HepG2 (cell line): ENCODE measurements at regions of chr3 and their contacts with region 1.

Region 1: GRCh38 chr3:57227204-57227929 is at the start of gene APPL1:
- DNase-seq: peak; percentile 84
- ATAC-seq: peak; percentile 97
- H3K4me3 ChIP-seq: peak within 1 kb of the TSS; percentile 74 to 86 (median 83)
- H3K27ac ChIP-seq: peak within 1 kb of the TSS; percentile 73
- H3K4me1 ChIP-seq: peaks cover 32% of the 10 kb centered on the region
- H3K27me3 ChIP-seq: no peaks in the 10 kb centered on the region; a peak in 1 of 5 replicates
- CTCF ChIP-seq: no peak
- EP300 ChIP-seq: no peak
- POLR2A ChIP-seq: peak; percentile 78 to 84
- RAD21 ChIP-seq: no peak
- total RNA-seq, gene APPL1: 29.0 and 47.9 TPM in 2 replicates

Region 2: DNA sequence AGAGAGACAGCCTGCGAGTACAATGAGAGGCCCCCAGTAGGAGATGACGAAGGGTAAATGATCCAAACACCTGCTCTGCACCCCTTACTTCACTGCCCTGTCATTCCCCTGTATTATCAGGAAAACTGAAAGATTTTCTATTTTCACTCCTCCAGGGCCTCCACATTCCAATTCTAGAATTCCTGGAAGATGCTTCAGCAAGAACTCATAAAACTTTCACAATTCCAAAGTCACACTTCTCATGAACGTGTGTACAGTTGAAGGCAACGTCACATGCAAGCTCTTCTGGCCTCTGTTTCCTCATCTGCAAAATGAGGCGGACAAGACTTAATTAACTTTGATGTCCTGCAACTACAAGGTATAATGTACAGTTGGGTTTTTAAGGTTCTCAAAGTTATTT is 229.7 kb before region 1 on chr3:
- CTCF ChIA-PET with region 1: no interaction called
- POLR2A ChIA-PET with region 1: no interaction called
- in situ Hi-C with region 1: loop called (anchors 10 kb)
- intact Hi-C with region 1: loop called (anchors 10 kb)
- DNase-seq: no peak
- ATAC-seq: no peak
- H3K4me3 ChIP-seq: no peak overlapping the region
- H3K27ac ChIP-seq: no peak overlapping the region
- H3K4me1 ChIP-seq: peaks cover 30% of the 10 kb centered on the region
- H3K27me3 ChIP-seq: no peaks in the 10 kb centered on the region
- CTCF ChIP-seq: no peak
- EP300 ChIP-seq: no peak
- POLR2A ChIP-seq: no peak
- RAD21 ChIP-seq: no peak

Region 3: DNA sequence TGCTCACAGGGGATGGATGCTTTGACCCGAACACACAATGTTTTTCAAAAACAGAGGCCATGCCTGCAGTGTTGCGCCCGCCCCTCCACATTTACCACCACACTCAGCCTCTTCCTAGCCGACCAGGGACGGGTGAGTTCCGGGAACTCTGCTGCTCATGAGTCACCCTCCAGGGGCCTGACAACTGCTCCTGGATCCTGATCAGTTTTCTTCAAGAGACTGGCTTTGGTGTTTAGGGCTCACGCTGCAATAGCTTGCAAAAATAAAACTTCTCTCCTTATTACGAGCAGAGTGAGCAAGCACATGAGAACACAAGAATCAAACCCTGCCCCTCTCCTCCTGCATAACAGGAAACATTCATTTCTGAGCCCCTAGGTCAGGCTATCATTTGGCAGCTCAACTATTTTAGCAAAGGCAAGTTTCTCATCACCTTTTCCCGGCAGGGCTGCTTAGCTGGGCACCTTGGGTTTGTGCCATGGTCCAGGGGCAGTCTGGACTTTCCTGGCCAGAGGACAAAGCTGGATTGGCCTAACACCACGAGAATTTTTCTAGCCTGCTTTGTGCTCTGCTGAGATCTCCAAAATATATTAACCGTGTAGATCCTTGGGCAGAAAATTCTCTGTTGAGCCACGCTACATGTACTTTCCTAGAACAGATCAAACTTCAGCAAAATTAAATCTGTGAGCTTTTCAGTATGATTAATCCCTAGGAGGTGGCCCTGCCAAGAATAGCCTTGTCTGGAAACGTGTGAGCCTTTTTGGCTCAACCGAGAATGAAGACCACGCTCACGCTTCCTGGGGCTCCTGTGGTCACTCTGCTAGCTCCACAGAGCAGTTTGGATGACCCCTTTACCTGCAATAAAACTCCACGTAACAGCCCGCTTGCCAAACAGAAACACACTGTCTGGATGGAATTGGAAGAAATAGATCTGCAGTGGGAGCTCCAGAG is 219.6 kb before region 1 on chr3:
- CTCF ChIA-PET with region 1: no interaction called
- POLR2A ChIA-PET with region 1: no interaction called
- in situ Hi-C with region 1: no loop called
- intact Hi-C with region 1: loop called (anchors 10 kb)
- DNase-seq: no peak
- ATAC-seq: no peak
- H3K4me3 ChIP-seq: no peak overlapping the region
- H3K27ac ChIP-seq: no peak overlapping the region
- H3K4me1 ChIP-seq: no peaks in the 10 kb centered on the region
- H3K27me3 ChIP-seq: no peaks in the 10 kb centered on the region
- CTCF ChIP-seq: no peak
- EP300 ChIP-seq: no peak
- POLR2A ChIP-seq: no peak
- RAD21 ChIP-seq: no peak